Activated CD4-positive, alpha-beta T cell treated with anti-CD3 and anti-CD28 coated beads for 36 hours (primary cell): ENCODE measurements at regions of chr4 and their contacts with region 1.

Region 1: DNA sequence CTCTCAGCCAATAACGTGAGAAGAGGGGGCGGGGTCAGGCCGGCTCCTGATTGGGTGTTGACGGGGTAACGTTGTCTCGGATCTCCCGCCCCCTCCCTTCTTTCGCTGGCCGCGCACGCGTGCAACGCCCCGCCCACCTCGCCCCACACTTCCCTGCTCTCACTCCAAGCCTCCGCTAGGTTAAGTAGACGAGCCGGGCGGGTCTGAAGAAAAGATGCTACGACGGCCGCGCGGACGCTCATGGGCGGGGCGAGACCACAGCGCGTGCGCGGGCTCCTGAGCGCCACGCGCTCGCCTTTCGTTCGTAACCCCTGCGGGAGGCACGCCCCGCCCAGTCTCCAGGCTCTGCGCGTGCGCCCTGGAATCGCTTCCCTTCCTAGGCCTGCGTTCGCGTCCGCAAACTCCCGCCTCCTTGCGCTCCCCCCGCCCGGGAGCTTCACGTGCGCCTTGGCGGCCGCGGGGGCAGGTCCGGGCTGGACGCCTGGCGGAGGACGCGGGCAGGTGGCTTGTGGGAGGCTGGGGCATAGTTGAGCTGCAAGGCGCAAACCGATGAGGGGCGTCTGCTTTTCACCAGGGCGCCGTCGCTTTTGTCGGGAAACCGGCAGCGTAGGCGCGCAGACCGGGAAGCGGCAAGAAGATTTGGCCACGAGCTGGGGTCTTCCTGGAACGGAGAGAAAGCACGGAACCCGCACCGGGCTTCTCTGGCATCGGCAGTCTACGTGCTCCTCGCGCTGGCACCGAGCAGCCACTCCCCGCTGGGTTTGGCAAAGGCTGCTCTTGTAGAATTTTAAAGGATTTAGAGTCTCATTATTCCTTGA is 467 bp upstream of the PGRMC2 start:
- DNase-seq: peak; percentile 100
- ATAC-seq: peak; percentile 85
- H3K4me3 Mint-ChIP-seq: peak overlapping the region; percentile 79
- H3K27ac Mint-ChIP-seq: peak overlapping the region; percentile 93
- H3K4me1 Mint-ChIP-seq: peaks cover 27% of the 10 kb centered on the region
- H3K27me3 Mint-ChIP-seq: no peaks in the 10 kb centered on the region

Region 2: GRCh38 chr4:127782274-127783025 is 505.6 kb before region 1 on chr4 and contains the start of gene HSPA4L:
- CTCF ChIA-PET with region 1: no interaction called
- POLR2A ChIA-PET with region 1: no interaction called
- intact Hi-C with region 1: loop called in 1 of 2 experiments (anchors 5 kb)
- DNase-seq: peak; percentile 65
- ATAC-seq: peak; percentile 59
- H3K4me3 Mint-ChIP-seq: peak within 1 kb of the TSS; percentile 74
- H3K27ac Mint-ChIP-seq: peak within 1 kb of the TSS; percentile 86
- H3K4me1 Mint-ChIP-seq: peaks cover 14% of the 10 kb centered on the region
- H3K27me3 Mint-ChIP-seq: peaks cover 56% of the 10 kb centered on the region
- total RNA-seq, gene HSPA4L: 2.7 to 3.0 TPM

Region 3: DNA sequence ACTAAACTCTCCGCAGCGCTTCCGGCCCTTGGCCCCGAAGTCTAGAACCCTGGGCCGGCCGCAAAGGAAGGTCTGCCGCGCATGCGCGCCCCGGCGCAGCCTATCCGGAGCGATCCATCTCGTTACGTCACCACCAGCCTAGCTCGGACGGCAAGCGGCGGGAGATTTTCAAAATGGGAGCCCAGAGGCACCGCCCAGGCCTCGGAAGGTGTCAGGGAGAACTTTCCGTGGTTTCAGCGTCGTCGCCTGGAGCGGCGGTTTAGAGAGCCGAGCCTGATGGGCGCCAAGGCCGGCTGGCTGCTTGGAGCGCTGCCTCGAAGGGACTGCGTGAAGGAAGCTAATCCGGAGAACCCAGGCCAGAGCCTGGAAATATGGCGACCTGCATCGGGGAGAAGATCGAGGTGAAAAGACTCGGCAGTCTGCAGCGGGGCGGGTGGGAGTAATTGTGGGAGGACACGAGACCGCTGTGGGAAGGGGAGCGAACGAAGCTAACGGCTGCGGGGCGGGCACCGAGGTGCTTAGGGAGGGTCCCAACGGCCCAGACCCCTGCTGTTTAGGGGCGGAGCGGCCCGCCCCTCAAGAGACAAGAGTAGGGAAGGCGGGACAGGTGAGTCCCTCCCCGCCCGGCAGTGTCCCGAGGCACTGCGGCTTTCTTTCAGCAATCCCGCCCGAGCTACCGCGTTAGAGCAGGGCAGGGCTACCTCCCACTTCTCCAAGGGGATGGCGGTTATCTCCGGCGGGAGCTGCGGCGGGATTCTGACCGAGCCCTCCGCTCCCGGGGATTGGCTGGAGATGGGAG is 407.1 kb before region 1 on chr4 and contains the start of gene PLK4:
- CTCF ChIA-PET with region 1: no interaction called
- POLR2A ChIA-PET with region 1: no interaction called
- intact Hi-C with region 1: loop called (anchors 1 to 5 kb)
- DNase-seq: peak; percentile 97
- ATAC-seq: peak; percentile 97
- H3K4me3 Mint-ChIP-seq: peak within 1 kb of the TSS; percentile 97
- H3K27ac Mint-ChIP-seq: peak within 1 kb of the TSS; percentile 98
- H3K4me1 Mint-ChIP-seq: peaks cover 24% of the 10 kb centered on the region
- H3K27me3 Mint-ChIP-seq: no peaks in the 10 kb centered on the region
- total RNA-seq, gene PLK4: 44.4 to 52.3 TPM

Region 4: GRCh38 chr4:127985995-127986394 is 302.1 kb before region 1 on chr4:
- CTCF ChIA-PET with region 1: no interaction called
- POLR2A ChIA-PET with region 1: no interaction called
- intact Hi-C with region 1: no loop called
- DNase-seq: no peak
- ATAC-seq: no peak
- H3K4me3 Mint-ChIP-seq: no peak overlapping the region
- H3K27ac Mint-ChIP-seq: no peak overlapping the region
- H3K4me1 Mint-ChIP-seq: no peaks in the 10 kb centered on the region
- H3K27me3 Mint-ChIP-seq: no peaks in the 10 kb centered on the region

Region 5: GRCh38 chr4:128513664-128514484 is 225.8 kb after region 1 on chr4:
- CTCF ChIA-PET with region 1: no interaction called
- POLR2A ChIA-PET with region 1: no interaction called
- intact Hi-C with region 1: loop called in 1 of 2 experiments (anchors 5 kb)
- DNase-seq: no peak
- ATAC-seq: peak; percentile 62
- H3K4me3 Mint-ChIP-seq: peak overlapping the region; percentile 36
- H3K27ac Mint-ChIP-seq: peak overlapping the region; percentile 92
- H3K4me1 Mint-ChIP-seq: peaks cover 12% of the 10 kb centered on the region
- H3K27me3 Mint-ChIP-seq: no peaks in the 10 kb centered on the region

Region 6: DNA sequence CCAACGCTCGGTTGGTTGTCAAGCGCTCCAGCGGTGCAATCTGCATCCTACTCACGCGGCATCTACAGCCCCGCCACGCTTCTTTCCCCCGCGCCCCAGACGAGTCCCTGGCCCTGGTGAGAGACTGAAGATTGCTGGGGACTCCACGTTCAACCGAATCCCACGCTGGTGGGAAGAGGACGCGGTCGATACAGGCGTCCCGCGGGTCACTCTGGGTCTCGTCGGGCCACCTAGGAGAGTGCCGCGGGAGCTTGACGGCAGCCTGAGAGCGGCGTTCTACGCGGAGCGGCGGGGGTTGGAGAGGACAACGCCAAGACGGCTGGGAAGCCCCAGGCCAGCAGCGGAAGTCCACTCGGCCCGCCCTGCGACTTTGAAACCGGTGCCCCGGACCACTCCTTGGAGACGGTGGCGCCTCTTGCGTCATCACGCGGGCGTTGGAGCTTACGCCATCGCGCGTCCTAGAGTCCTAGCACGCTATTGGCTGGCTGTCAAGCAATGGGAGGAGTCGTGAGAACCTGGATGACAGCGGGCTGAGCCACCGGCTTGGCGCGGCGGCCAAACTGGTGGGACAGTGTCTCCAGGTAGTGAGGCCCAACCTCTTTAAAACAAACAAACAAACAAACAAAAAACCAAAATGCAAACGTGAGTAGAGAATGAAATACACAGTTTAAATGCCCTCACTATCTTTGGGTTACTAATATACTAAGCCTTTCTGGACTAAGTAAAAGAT is 805.3 kb after region 1 on chr4 and contains the start of gene SCLT1:
- CTCF ChIA-PET with region 1: interaction called, 3 read pairs
- POLR2A ChIA-PET with region 1: interaction called, 5 read pairs
- intact Hi-C with region 1: loop called (anchors 1 to 2 kb)
- DNase-seq: peak; percentile 98
- ATAC-seq: peak; percentile 94
- H3K4me3 Mint-ChIP-seq: no peak within 1 kb of the TSS
- H3K27ac Mint-ChIP-seq: peak within 1 kb of the TSS; percentile 35
- H3K4me1 Mint-ChIP-seq: peaks cover 27% of the 10 kb centered on the region
- H3K27me3 Mint-ChIP-seq: no peaks in the 10 kb centered on the region
- total RNA-seq, gene SCLT1: 18.7 to 19.3 TPM